K562 (cell line): ENCODE measurements at regions of chr2 and their contacts with region 1.

Region 1: GRCh38 chr2:31704561-31705212 is 123.9 kb upstream of the SRD5A2 start:
- DNase-seq: no peak
- ATAC-seq: no peak
- H3K4me3 ChIP-seq: no peak overlapping the region
- H3K27ac ChIP-seq: no peak overlapping the region
- H3K4me1 ChIP-seq: no peaks in the 10 kb centered on the region
- H3K27me3 ChIP-seq: 0 out of 5 replicates have a peak, but pooled peaks cover 0 to 5% of the 10 kb centered on the region in 2 experiments
- CTCF ChIP-seq: no peak
- EP300 ChIP-seq: no peak
- POLR2A ChIP-seq: no peak
- RAD21 ChIP-seq: no peak

Region 2: GRCh38 chr2:31729764-31730092 is 25.0 kb after region 1 on chr2:
- CTCF ChIA-PET with region 1: no interaction called
- POLR2A ChIA-PET with region 1: no interaction called
- in situ Hi-C with region 1: no loop called
- intact Hi-C with region 1: no loop called
- DNase-seq: peak; percentile 13 to 42 (median 26)
- ATAC-seq: peak; percentile 96
- H3K4me3 ChIP-seq: no peak overlapping the region
- H3K27ac ChIP-seq: no peak overlapping the region
- H3K4me1 ChIP-seq: no peaks in the 10 kb centered on the region
- H3K27me3 ChIP-seq: no peaks in the 10 kb centered on the region
- CTCF ChIP-seq: peak; percentile 59 to 62 (median 61)
- EP300 ChIP-seq: no peak
- POLR2A ChIP-seq: no peak
- RAD21 ChIP-seq: peak in 1 of 2 experiments; percentile 65; a peak in 2 of 4 replicates

Region 3: GRCh38 chr2:32124660-32125059 is 420.0 kb after region 1 on chr2:
- CTCF ChIA-PET with region 1: no interaction called
- POLR2A ChIA-PET with region 1: no interaction called
- in situ Hi-C with region 1: no loop called
- intact Hi-C with region 1: no loop called
- DNase-seq: no peak
- ATAC-seq: no peak
- H3K4me3 ChIP-seq: no peak overlapping the region
- H3K27ac ChIP-seq: no peak overlapping the region
- H3K4me1 ChIP-seq: no peaks in the 10 kb centered on the region
- H3K27me3 ChIP-seq: no peaks in the 10 kb centered on the region
- CTCF ChIP-seq: no peak
- EP300 ChIP-seq: no peak
- POLR2A ChIP-seq: no peak
- RAD21 ChIP-seq: no peak

Region 4: GRCh38 chr2:33395655-33396249 is 1691.1 kb after region 1 on chr2:
- CTCF ChIA-PET with region 1: no interaction called
- POLR2A ChIA-PET with region 1: no interaction called
- in situ Hi-C with region 1: loop called (anchors 25 kb)
- intact Hi-C with region 1: no loop called
- DNase-seq: peak; percentile 52 to 63 (median 55)
- ATAC-seq: peak; percentile 86
- H3K4me3 ChIP-seq: no peak overlapping the region
- H3K27ac ChIP-seq: no peak overlapping the region
- H3K4me1 ChIP-seq: peaks cover 0 to 2% of the 10 kb centered on the region in 2 experiments; a peak in 1 of 5 replicates
- H3K27me3 ChIP-seq: no peaks in the 10 kb centered on the region
- CTCF ChIP-seq: peak; percentile 67 to 79 (median 74); a peak in 5 of 6 replicates
- EP300 ChIP-seq: no peak
- POLR2A ChIP-seq: no peak
- RAD21 ChIP-seq: peak; percentile 48 to 73